Activated T-helper 2 cell treated with anti-CD3 and anti-CD28 coated beads, Interferon-gamma antibody, Interleukin-2, Interleukin-4, amounts not matched to agents 10 μg/mL and 5 μg/mL and 100 μg/mL, durations not matched to agents 14 hours and 24 hours and 36 hours (primary cell): ENCODE measurements at regions of chr6 and their contacts with region 1.

Region 1: GRCh38 chr6:135555550-135555949 is 58.0 kb upstream of the AHI1 start:
- DNase-seq: no peak
- H3K4me3 Mint-ChIP-seq: no peak overlapping the region
- H3K27ac Mint-ChIP-seq: peak overlapping the region; percentile 68
- H3K4me1 Mint-ChIP-seq: peaks cover 44% of the 10 kb centered on the region
- H3K27me3 Mint-ChIP-seq: no peaks in the 10 kb centered on the region

Region 2: DNA sequence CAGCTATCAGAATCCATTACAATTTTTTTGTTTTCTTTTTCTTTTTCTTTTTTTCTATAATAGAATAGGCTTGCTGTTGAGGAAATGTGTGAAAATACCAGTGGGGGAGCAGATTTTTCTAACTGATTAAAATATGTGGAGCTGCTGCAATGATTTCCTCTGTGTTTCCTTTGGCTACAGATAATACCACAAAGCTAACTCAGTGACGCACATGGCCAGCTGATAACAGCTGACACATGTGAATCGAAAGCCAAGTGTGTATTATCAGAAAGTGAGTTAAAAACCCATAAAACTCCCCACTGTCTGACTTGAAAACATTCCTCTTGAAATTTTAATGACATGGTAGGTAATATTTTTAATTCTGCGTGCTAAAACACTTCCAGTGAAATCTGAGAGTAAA is 12.8 kb after region 1 on chr6:
- intact Hi-C with region 1: loop called (anchors 1 kb)
- DNase-seq: peak; percentile 66
- H3K4me3 Mint-ChIP-seq: no peak overlapping the region
- H3K27ac Mint-ChIP-seq: peak overlapping the region; percentile 94
- H3K4me1 Mint-ChIP-seq: peaks cover 71% of the 10 kb centered on the region
- H3K27me3 Mint-ChIP-seq: no peaks in the 10 kb centered on the region

Region 3: GRCh38 chr6:135577059-135577538 is 21.5 kb after region 1 on chr6:
- intact Hi-C with region 1: loop called (anchors 2 kb)
- DNase-seq: no peak
- H3K4me3 Mint-ChIP-seq: peak overlapping the region; percentile 39
- H3K27ac Mint-ChIP-seq: peak overlapping the region; percentile 99
- H3K4me1 Mint-ChIP-seq: peaks cover 57% of the 10 kb centered on the region
- H3K27me3 Mint-ChIP-seq: no peaks in the 10 kb centered on the region